Heart right ventricle (tissue), 16 donors: ENCODE measurements at regions of chr10 and their contacts with region 1.

Region 1: DNA sequence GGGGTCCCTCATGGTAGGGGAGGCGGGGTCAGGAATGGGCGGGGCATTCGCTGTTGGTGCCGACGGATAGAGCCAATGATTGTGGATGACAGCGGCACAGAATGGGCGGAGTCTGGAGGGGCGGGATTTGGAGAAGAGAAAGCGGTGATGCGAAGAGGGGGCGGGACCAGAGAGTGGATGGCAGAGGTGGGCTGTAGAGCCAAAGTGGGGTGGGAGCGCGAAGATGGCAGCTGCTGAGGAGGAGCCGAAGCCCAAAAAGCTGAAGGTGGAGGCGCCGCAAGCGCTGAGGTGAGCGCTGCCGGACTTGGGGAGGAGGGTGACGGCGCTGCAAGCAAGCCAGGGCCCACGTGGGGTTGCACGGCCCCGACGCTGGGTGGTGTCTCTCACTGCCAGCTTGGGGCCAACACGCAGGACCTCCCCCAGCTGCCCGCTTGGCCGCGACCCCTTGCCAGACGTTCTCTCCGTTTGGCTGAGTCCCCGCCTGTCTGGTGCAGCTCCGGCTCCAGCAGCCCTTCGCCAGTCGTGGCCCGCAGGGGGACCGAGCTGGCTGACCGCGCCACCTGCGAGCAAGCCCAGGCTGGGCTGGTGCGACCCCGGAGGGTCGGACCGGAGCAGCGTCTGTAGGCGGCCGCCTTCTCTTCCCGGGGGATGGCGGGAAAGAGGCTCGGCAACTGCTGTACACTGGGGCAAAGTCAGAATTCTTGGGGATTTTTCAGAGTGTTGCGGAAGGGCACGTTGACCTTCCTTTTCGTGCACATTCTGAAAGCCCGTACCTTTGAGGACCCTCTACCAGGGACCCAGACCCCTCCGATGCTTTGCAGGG is at the start of gene ADK:
- DNase-seq: peak; percentile 99 to 100
- ATAC-seq: peak; percentile 96 to 99 (median 98)
- H3K4me3 ChIP-seq: peak within 1 kb of the TSS; percentile 56 to 99 (median 76)
- H3K27ac ChIP-seq: peak within 1 kb of the TSS; percentile 62 to 93 (median 90)
- H3K4me1 ChIP-seq: peaks cover 0 to 61% (median 40%) of the 10 kb centered on the region in 9 donors
- H3K27me3 ChIP-seq: no peaks in the 10 kb centered on the region
- CTCF ChIP-seq: peak in 4 of 9 donors; percentile 37 to 62 (median 42)
- total RNA-seq, gene ADK: 25.5 to 50.0 (median 40.1) TPM

Region 2: GRCh38 chr10:74176380-74177139 is 25.3 kb after region 1 on chr10:
- intact Hi-C with region 1: loop called in 3 of 10 experiments (anchors 2 kb)
- DNase-seq: peak; percentile 92
- ATAC-seq: peak; percentile 97 to 99 (median 98)
- H3K4me3 ChIP-seq: peak overlapping the region; percentile 52 to 92 (median 80)
- H3K27ac ChIP-seq: peak overlapping the region; percentile 26 to 90 (median 86)
- H3K4me1 ChIP-seq: peaks cover 0 to 29% (median 16%) of the 10 kb centered on the region in 9 donors
- H3K27me3 ChIP-seq: no peaks in the 10 kb centered on the region
- CTCF ChIP-seq: peak in 1 of 9 donors; percentile 7